CD4-positive, alpha-beta T cell (primary cell): ENCODE measurements at regions of chr19 and their contacts with region 1.

Region 1: DNA sequence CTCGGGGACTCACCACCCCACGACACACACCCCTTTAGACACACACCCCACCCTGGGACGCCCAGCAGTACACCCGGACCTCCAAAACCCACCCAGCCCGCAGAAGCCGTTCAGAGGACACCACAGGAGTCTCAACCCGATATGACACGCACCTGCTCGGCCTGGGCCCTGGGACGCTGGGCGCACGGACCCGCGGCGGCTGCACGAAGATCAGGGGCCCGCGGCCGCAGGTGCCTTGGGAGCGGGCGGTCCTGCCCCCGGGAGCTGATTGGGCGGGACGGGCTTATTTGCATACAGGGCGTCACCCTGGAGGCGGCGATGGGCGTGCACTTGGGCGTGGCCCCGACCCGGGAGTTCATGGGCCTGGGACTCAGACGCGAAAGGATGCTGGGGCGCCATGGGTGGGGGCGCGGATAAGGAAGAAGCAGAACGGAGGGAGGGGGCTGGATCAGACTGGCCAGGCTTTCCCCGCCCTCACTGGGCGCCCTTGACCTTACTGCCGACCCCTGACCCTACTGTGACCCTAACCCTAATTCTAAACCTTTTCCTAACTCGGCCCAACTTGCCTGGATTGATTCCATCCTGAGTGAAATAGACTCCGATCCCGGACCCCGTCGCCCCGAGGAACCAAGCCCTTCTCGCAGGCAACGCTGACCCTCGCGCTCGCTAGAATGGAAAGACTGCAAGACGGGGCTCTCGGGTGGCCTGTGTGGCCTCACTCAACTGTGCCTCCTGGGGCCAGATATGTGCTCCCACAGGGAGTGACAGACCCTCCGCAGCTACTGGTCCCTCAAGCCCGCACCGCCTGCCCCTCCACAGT is at the start of gene MEF2B:
- DNase-seq: peak; percentile 52 to 86 (median 74)
- ATAC-seq: peak; percentile 99
- H3K4me3 ChIP-seq: peak within 1 kb of the TSS; percentile 22
- H3K4me3 Mint-ChIP-seq: no peak within 1 kb of the TSS
- H3K27ac ChIP-seq: no peak within 1 kb of the TSS
- H3K27ac Mint-ChIP-seq: no peak within 1 kb of the TSS
- H3K4me1 ChIP-seq: peaks cover 14% of the 10 kb centered on the region
- H3K4me1 Mint-ChIP-seq: peaks cover 21% of the 10 kb centered on the region
- H3K27me3 ChIP-seq: no peaks in the 10 kb centered on the region
- H3K27me3 Mint-ChIP-seq: no peaks in the 10 kb centered on the region
- CTCF ChIP-seq: no peak
- total RNA-seq, gene MEF2B: 1.9 to 3.0 TPM

Region 2: DNA sequence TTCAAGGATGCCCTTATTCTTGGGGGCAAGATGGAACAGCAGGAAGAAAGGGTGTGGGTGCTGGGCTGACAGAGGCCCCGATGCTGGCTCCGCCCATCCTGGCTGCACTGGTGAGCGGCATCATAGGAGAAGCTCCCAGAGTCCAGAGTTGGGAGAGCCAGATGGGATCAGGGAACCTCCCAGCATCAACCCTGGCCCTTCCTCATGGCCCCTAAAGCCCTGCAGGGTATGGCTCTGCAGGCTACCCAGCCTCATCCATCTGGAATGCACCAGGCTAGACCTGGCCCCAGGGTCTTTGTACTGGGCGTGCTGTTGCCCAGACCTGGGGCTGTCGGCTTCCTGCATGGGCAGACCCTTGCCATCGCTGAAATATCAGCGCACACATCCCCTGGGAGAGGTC is 640.5 kb before region 1 on chr19:
- CTCF ChIA-PET with region 1: no interaction called
- POLR2A ChIA-PET with region 1: no interaction called
- intact Hi-C with region 1: no loop called
- DNase-seq: no peak
- ATAC-seq: no peak
- H3K4me3 ChIP-seq: no peak overlapping the region
- H3K4me3 Mint-ChIP-seq: no peak overlapping the region
- H3K27ac ChIP-seq: no peak overlapping the region
- H3K27ac Mint-ChIP-seq: no peak overlapping the region
- H3K4me1 ChIP-seq: no peaks in the 10 kb centered on the region
- H3K4me1 Mint-ChIP-seq: no peaks in the 10 kb centered on the region
- H3K27me3 ChIP-seq: no peaks in the 10 kb centered on the region
- H3K27me3 Mint-ChIP-seq: no peaks in the 10 kb centered on the region
- CTCF ChIP-seq: no peak

Region 3: DNA sequence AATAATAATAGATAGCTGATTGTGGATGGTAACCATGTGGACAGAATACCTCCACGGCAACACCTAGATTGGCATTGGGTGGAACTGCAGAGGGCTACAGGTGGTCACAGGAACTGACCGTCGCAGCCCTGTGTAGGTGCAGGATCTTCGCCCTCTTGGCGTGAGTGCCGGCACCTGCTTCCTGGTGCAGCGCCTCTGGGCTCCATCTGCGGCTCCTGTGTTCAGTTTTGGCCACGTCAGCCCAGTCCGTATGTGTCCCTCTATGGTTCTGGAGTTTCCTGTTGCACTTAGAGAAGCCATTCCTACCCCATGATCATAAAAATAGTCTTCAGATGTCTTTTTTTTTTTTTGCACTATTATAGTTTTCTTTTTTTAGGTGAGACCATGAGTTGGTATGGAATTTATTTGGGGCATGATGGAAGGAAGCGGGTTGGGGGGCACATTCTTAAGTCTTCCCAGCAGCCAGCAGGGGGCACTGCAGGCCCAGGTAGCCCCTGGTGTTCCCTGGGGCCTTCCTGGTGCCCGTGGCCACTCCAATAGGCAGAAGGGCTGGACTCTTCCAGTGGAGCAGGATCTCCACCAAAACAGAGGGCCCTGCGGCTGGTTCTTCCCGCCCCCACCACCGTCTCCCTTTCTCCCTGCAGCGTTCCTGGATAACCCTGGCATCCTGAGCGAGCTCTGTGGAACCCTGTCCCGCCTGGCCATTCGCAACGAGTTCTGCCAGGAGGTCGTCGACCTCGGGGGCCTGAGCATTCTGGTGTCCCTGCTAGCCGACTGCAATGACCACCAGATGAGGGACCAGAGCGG is 116.6 kb before region 1 on chr19:
- CTCF ChIA-PET with region 1: no interaction called
- POLR2A ChIA-PET with region 1: no interaction called
- intact Hi-C with region 1: loop called in 1 of 2 experiments (anchors 1 kb)
- DNase-seq: peak; percentile 42 to 84 (median 62)
- ATAC-seq: peak; percentile 79
- H3K4me3 ChIP-seq: no peak overlapping the region
- H3K4me3 Mint-ChIP-seq: no peak overlapping the region
- H3K27ac ChIP-seq: no peak overlapping the region
- H3K27ac Mint-ChIP-seq: no peak overlapping the region
- H3K4me1 ChIP-seq: no peaks in the 10 kb centered on the region
- H3K4me1 Mint-ChIP-seq: no peaks in the 10 kb centered on the region
- H3K27me3 ChIP-seq: no peaks in the 10 kb centered on the region
- H3K27me3 Mint-ChIP-seq: no peaks in the 10 kb centered on the region
- CTCF ChIP-seq: peak; percentile 87

Region 4: DNA sequence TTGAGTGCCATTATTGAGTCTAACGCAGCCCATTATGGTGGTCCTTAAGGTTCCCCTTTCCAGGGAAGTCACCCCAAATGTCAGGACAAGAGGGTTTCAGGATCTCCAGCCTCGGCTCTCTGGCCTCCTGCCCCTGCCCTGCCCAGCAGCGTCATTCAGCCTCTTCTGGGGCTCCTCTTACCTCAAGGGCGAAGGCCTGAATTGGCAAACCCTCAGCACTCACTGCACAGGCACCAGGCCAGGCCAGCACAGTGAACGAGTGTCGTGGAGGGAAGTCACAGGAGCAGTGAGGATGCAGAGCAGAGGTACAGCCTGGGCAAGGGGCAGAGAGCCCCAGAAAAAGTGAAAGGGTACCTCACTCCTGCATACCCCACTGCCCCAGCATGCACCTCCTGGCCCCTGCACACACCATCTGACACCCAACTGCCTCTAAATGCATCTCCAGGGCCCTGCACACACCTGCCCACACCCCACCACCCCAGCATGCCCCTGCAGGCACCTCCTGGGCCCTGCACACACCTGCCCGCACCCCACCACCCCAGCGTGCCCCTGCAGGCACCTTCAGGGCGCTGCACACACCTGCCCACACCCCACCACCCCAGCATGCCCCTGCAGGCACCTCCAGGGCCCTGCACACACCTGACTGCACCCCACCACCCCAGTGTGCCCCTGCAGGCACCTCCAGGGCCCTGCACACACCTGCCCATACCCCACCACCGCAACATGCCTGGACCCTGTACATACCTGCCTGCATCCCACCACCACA is 86.7 kb before region 1 on chr19:
- CTCF ChIA-PET with region 1: no interaction called
- POLR2A ChIA-PET with region 1: no interaction called
- intact Hi-C with region 1: no loop called
- DNase-seq: no peak
- ATAC-seq: no peak
- H3K4me3 ChIP-seq: no peak overlapping the region
- H3K4me3 Mint-ChIP-seq: no peak overlapping the region
- H3K27ac ChIP-seq: no peak overlapping the region
- H3K27ac Mint-ChIP-seq: no peak overlapping the region
- H3K4me1 ChIP-seq: no peaks in the 10 kb centered on the region
- H3K4me1 Mint-ChIP-seq: peaks cover 4% of the 10 kb centered on the region
- H3K27me3 ChIP-seq: no peaks in the 10 kb centered on the region
- H3K27me3 Mint-ChIP-seq: no peaks in the 10 kb centered on the region
- CTCF ChIP-seq: no peak

Region 5: DNA sequence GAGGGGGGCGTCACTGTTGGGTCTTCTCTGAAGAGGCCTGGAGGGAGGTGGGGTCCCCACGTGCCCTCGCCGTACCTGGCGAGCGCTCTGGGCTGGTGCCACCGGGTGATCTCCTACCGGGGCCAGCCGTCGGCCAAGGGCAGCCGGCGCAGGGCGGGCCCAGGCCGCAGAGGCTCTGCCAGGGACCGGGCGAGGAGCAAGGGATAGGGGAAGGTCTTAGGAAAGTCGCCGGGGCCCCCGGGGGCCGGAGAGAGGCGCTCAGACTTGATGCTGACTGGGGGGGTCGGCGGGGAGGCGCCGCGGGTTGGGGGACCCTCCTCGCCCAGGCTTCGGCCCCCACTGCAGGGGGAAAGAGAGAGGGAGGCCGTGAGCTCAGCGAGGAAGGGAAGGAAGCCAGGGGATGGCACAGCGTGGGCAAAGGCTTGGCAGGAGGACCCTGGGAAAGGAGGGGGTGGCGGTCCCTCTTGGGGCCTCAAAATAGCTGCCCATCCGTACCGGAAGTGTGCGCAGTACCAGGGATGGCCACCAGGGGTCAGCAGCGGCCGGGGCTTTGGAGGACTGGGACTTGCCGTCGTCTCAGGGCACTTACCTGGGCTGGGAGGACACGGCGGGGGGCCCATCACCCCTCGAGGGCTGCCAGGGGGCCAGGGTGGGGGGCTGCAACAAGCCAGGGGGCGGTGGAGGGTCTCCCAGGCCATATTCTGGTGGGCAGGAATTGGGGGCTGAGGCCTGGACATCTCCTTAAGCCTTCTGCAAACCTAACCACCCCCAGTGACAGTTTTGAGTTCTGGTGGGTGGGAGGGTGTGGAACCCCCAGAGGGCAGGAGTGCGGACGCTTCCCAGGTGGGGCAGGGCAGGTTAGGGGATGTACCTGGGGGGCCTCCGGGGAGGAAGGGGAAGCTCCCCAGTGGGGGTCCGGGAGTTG is 24.3 kb before region 1 on chr19:
- CTCF ChIA-PET with region 1: interaction called, 9 read pairs
- POLR2A ChIA-PET with region 1: interaction called, 3 read pairs
- intact Hi-C with region 1: loop called (anchors 1 to 2 kb)
- DNase-seq: peak; percentile 72 to 91 (median 86)
- ATAC-seq: peak; percentile 98
- H3K4me3 ChIP-seq: no peak overlapping the region
- H3K4me3 Mint-ChIP-seq: no peak overlapping the region
- H3K27ac ChIP-seq: no peak overlapping the region
- H3K27ac Mint-ChIP-seq: no peak overlapping the region
- H3K4me1 ChIP-seq: peaks cover 8% of the 10 kb centered on the region
- H3K4me1 Mint-ChIP-seq: no peaks in the 10 kb centered on the region
- H3K27me3 ChIP-seq: no peaks in the 10 kb centered on the region
- H3K27me3 Mint-ChIP-seq: no peaks in the 10 kb centered on the region
- CTCF ChIP-seq: peak; percentile 79

Region 6: GRCh38 chr19:19238126-19238852 is 68.0 kb after region 1 on chr19:
- CTCF ChIA-PET with region 1: no interaction called
- POLR2A ChIA-PET with region 1: no interaction called
- intact Hi-C with region 1: no loop called
- DNase-seq: no peak
- ATAC-seq: no peak
- H3K4me3 ChIP-seq: no peak overlapping the region
- H3K4me3 Mint-ChIP-seq: no peak overlapping the region
- H3K27ac ChIP-seq: no peak overlapping the region
- H3K27ac Mint-ChIP-seq: no peak overlapping the region
- H3K4me1 ChIP-seq: no peaks in the 10 kb centered on the region
- H3K4me1 Mint-ChIP-seq: no peaks in the 10 kb centered on the region
- H3K27me3 ChIP-seq: peaks cover 0 to 8% of the 10 kb centered on the region in 2 experiments
- H3K27me3 Mint-ChIP-seq: peaks cover 23% of the 10 kb centered on the region
- CTCF ChIP-seq: no peak